Activated naive CD4-positive, alpha-beta T cell treated with anti-CD3 and anti-CD28 coated beads, Interleukin-2, amount 10 ng/mL, durations not matched to agents 7 days and 5 days (primary cell): ENCODE measurements at regions of chr14 and their contacts with region 1.

Region 1: GRCh38 chr14:54175298-54175942 is 218.8 kb upstream of the BMP4 start:
- DNase-seq: peak; percentile 61
- H3K4me3 Mint-ChIP-seq: no peak overlapping the region
- H3K27ac Mint-ChIP-seq: no peak overlapping the region
- H3K4me1 Mint-ChIP-seq: peaks cover 8% of the 10 kb centered on the region
- H3K27me3 Mint-ChIP-seq: peaks cover 27% of the 10 kb centered on the region

Region 2: GRCh38 chr14:53929871-53930715 is 245.3 kb before region 1 on chr14:
- CTCF ChIA-PET with region 1: interaction called, 12 read pairs
- DNase-seq: peak; percentile 57
- H3K4me3 Mint-ChIP-seq: no peak overlapping the region
- H3K27ac Mint-ChIP-seq: no peak overlapping the region
- H3K4me1 Mint-ChIP-seq: no peaks in the 10 kb centered on the region
- H3K27me3 Mint-ChIP-seq: no peaks in the 10 kb centered on the region

Region 3: GRCh38 chr14:54186821-54187763 is 11.7 kb after region 1 on chr14:
- CTCF ChIA-PET with region 1: interaction called, 10 read pairs
- DNase-seq: no peak
- H3K4me3 Mint-ChIP-seq: no peak overlapping the region
- H3K27ac Mint-ChIP-seq: no peak overlapping the region
- H3K4me1 Mint-ChIP-seq: peaks cover 6% of the 10 kb centered on the region
- H3K27me3 Mint-ChIP-seq: peaks cover 6% of the 10 kb centered on the region